ENCODE measurements at regions of chr6 and their contacts with region 1.

Region 1: GRCh38 chr6:56314683-56315523 is 67.5 kb upstream of the COL21A1 start:
- DNase-seq: no peak
- ATAC-seq: no peak

Region 2: DNA sequence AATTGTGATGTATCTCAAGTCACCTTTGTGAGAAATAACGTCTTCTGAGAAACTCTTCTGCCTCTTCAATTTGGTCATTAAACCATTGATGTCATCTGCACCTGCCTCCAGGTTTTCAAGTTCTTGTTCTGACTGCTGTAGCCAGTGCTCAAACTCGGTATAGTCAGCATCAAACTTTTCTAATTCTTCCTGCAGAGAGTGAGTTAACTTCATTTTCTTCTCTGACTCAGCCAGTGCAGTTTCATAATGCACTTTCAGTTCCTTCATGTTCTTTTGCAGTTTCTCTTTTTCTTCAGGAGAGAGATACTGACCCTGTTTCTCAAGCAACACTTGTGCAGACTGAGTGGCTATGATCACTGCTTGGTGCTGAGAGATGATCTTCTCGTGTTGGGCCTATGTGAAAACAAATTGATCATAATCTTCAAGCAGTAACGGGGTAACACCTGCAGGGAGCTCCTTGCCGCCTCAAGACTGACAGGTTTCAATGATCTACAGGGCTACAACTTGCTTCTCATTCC is 279.0 kb after region 1 on chr6:
- intact Hi-C with region 1: loop called (anchors 5 kb)
- DNase-seq: no peak
- ATAC-seq: peak; percentile 46

Measured in Right ventricle myocardium inferior (tissue), 1 donor.